AG04449 (cell line): ENCODE measurements at regions of chr1 and their contacts with region 1.

Region 1: GRCh38 chr1:229558571-229559335 is at the start of gene ABCB10:
- DNase-seq: peak; percentile 73
- H3K4me3 ChIP-seq: peak within 1 kb of the TSS; percentile 81
- CTCF ChIP-seq: peak; percentile 95

Region 2: GRCh38 chr1:229341774-229342655 is 216.7 kb before region 1 on chr1:
- CTCF ChIA-PET with region 1: no interaction called
- POLR2A ChIA-PET with region 1: no interaction called
- DNase-seq: no peak
- H3K4me3 ChIP-seq: peak overlapping the region; percentile 83
- CTCF ChIP-seq: no peak

Region 3: GRCh38 chr1:229440851-229441537 is 117.8 kb before region 1 on chr1:
- CTCF ChIA-PET with region 1: no interaction called
- POLR2A ChIA-PET with region 1: no interaction called
- DNase-seq: peak; percentile 45
- H3K4me3 ChIP-seq: no peak overlapping the region
- CTCF ChIP-seq: no peak

Region 4: GRCh38 chr1:229529639-229530038 is 29.1 kb before region 1 on chr1:
- CTCF ChIA-PET with region 1: interaction called, 10 read pairs
- POLR2A ChIA-PET with region 1: interaction called, 4 read pairs
- DNase-seq: no peak
- H3K4me3 ChIP-seq: no peak overlapping the region
- CTCF ChIP-seq: no peak

Region 5: GRCh38 chr1:229547542-229547941 is 11.2 kb before region 1 on chr1:
- CTCF ChIA-PET with region 1: interaction called, 36 read pairs
- POLR2A ChIA-PET with region 1: no interaction called
- DNase-seq: no peak
- H3K4me3 ChIP-seq: no peak overlapping the region
- CTCF ChIP-seq: no peak

Region 6: GRCh38 chr1:229596925-229597699 is 38.4 kb after region 1 on chr1:
- CTCF ChIA-PET with region 1: interaction called, 10 read pairs
- POLR2A ChIA-PET with region 1: no interaction called
- DNase-seq: peak; percentile 33
- H3K4me3 ChIP-seq: no peak overlapping the region
- CTCF ChIP-seq: no peak

Region 7: DNA sequence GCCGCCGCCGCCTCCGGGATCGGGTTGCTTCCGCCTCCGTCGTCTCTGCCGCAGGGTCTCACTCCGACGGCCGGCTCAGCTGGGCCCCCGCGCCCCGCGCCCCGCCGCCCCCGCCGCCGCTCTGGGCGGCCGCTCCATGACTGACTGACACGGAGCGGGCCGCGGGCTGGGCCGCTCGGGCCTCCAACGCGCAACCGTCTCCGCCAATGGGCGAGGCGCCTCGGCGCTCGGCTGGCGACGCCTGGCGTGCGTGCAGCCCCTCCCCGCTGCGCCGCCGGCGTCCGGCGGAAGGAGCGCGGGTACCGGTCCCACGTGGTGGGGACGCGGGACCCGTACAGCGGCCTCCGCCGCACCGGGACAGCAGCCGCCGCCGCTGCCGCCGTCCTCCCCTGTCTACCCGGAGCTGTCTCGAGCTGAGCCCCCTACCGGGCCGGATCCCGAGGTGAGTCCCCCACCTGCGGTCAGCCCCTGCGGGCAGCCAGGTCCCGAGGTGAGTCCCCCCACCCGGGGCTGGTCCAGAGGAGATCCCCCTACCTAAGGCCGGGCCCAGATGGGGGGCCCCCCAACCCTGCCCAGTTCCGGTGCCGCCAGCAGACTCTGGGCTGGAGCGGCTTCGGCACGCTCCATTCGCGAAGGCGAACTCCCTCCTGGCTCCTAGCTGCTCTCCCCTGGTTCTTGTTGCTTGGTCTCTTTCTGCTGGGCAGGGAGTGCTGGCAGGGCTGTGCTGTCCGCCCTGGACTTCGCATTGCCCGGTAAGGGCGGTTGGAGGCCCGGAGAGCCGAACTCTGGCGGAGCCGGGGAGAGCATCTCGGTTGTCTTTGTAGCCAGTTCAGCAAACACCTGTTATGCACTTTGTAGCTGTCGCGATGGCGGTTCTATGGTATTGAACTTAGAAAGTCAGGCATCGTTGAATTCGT is 67.4 kb after region 1 on chr1 and contains the starts of genes TAF5L and URB2:
- CTCF ChIA-PET with region 1: interaction called, 27 read pairs
- POLR2A ChIA-PET with region 1: interaction called, 6 read pairs
- DNase-seq: peak; percentile 26
- H3K4me3 ChIP-seq: peak within 1 kb of the TSS; percentile 93
- CTCF ChIP-seq: no peak